ENCODE measurements at regions of chr15 and their contacts with region 1.

Region 1: GRCh38 chr15:86624261-86625036 is 544.8 kb downstream of the AGBL1 start:
- DNase-seq: peak; percentile 97
- H3K4me3 Mint-ChIP-seq: peak overlapping the region; percentile 37
- H3K27ac Mint-ChIP-seq: peak overlapping the region; percentile 32
- H3K4me1 Mint-ChIP-seq: peaks cover 28% of the 10 kb centered on the region
- H3K27me3 Mint-ChIP-seq: no peaks in the 10 kb centered on the region
- CTCF ChIP-seq: peak; percentile 77

Region 2: GRCh38 chr15:86115144-86115801 is 509.2 kb before region 1 on chr15:
- CTCF ChIA-PET with region 1: no interaction called
- POLR2A ChIA-PET with region 1: no interaction called
- intact Hi-C with region 1: loop called (anchors 1 kb)
- DNase-seq: peak; percentile 3
- H3K4me3 Mint-ChIP-seq: no peak overlapping the region
- H3K27ac Mint-ChIP-seq: no peak overlapping the region
- H3K4me1 Mint-ChIP-seq: no peaks in the 10 kb centered on the region
- H3K27me3 Mint-ChIP-seq: peaks cover 65% of the 10 kb centered on the region
- CTCF ChIP-seq: no peak

Region 3: DNA sequence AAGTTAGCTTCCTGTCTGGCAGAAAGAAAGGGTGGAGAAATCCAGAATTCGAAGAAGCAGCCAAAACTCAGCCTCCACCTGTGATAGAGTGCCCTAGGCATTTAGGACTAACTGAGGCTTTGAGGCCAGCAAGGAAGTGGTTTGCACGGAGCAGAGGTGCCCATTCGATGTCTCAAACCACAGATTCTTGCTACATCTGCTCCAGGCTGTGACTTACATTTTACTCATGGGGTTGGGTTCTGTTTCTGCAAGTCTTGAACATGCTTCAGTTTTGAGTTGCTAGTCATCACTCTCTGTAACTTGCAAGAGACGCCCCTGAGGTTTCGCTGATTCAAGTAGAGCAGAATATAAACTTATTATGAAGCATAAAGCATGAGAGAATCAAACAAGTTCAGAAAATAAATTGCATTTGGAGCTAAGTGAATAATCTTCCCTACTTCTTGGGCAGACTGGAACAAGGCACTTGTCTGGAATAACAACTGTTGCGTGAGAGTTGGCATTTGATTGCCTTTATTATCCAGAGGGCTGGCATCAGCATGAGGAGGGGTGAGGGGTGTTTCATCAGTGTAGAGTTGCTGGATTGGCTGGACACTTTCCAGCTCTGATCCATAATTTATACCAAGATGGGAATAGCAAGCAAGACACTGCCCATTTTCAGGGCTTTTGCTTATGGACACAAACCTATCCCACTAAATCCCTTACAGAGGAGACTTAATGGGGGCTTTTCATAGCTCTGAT is 288.2 kb before region 1 on chr15:
- CTCF ChIA-PET with region 1: no interaction called
- POLR2A ChIA-PET with region 1: no interaction called
- intact Hi-C with region 1: loop called (anchors 5 kb)
- DNase-seq: peak; percentile 97
- H3K4me3 Mint-ChIP-seq: peak overlapping the region; percentile 30
- H3K27ac Mint-ChIP-seq: peak overlapping the region; percentile 81
- H3K4me1 Mint-ChIP-seq: peaks cover 49% of the 10 kb centered on the region
- H3K27me3 Mint-ChIP-seq: no peaks in the 10 kb centered on the region
- CTCF ChIP-seq: no peak

Region 4: DNA sequence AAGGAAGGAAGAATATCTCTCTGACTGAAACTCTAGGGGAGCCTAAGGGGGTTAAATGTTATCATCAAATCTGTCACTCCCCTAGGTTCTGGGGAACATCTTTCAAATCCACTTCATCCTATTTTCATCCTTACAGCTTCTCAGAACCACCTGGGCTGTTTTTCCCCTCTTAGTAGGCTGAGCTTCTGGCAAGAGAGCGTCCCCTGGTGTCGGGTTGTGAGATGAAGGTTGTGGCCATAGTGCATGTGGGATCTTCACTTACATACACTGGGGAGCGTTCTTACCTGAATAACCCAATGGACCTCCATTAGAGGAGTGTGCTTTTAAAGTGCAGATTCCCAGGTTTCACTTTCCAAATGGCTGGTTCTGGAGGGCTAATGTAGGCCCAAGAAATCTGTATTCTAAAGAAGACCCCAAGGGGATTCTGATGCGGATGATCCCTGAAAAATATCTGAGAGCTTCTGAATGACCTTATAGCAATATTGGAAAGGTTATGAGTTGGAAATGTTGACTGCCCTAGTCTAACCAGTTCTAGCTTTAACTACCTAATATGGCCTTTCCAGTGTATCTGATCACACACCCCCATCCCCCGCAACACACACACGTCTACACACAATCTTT is 118.9 kb after region 1 on chr15:
- CTCF ChIA-PET with region 1: interaction called, 40 read pairs
- POLR2A ChIA-PET with region 1: no interaction called
- intact Hi-C with region 1: loop called (anchors 1 kb)
- DNase-seq: peak; percentile 55
- H3K4me3 Mint-ChIP-seq: no peak overlapping the region
- H3K27ac Mint-ChIP-seq: no peak overlapping the region
- H3K4me1 Mint-ChIP-seq: no peaks in the 10 kb centered on the region
- H3K27me3 Mint-ChIP-seq: no peaks in the 10 kb centered on the region
- CTCF ChIP-seq: peak; percentile 90

Region 5: GRCh38 chr15:86877171-86877646 is 252.8 kb after region 1 on chr15:
- CTCF ChIA-PET with region 1: interaction called, 5 read pairs
- POLR2A ChIA-PET with region 1: no interaction called
- intact Hi-C with region 1: loop called (anchors 10 kb)
- DNase-seq: no peak
- H3K4me3 Mint-ChIP-seq: no peak overlapping the region
- H3K27ac Mint-ChIP-seq: no peak overlapping the region
- H3K4me1 Mint-ChIP-seq: no peaks in the 10 kb centered on the region
- H3K27me3 Mint-ChIP-seq: peaks cover 8% of the 10 kb centered on the region
- CTCF ChIP-seq: no peak

Region 6: GRCh38 chr15:88246666-88247446 is 1622.4 kb after region 1 on chr15:
- CTCF ChIA-PET with region 1: interaction called, 12 read pairs
- POLR2A ChIA-PET with region 1: interaction called, 3 read pairs
- intact Hi-C with region 1: loop called (anchors 1 kb)
- DNase-seq: peak; percentile 62
- H3K4me3 Mint-ChIP-seq: no peak overlapping the region
- H3K27ac Mint-ChIP-seq: no peak overlapping the region
- H3K4me1 Mint-ChIP-seq: peaks cover 5% of the 10 kb centered on the region
- H3K27me3 Mint-ChIP-seq: no peaks in the 10 kb centered on the region
- CTCF ChIP-seq: peak; percentile 81

Measured in MCF 10A (cell line).